ENCODE measurements at regions of chr2 and their contacts with region 1.

Region 1: GRCh38 chr2:208033758-208034502 is 8.6 kb upstream of the PLEKHM3 start:
- DNase-seq: peak; percentile 51 to 68 (median 54)
- ATAC-seq: peak; percentile 97
- H3K4me3 ChIP-seq: no peak overlapping the region
- H3K27ac ChIP-seq: no peak overlapping the region
- H3K4me1 ChIP-seq: no peaks in the 10 kb centered on the region; a peak in 1 of 5 replicates
- H3K27me3 ChIP-seq: no peaks in the 10 kb centered on the region
- CTCF ChIP-seq: peak; percentile 47 to 71 (median 55)
- EP300 ChIP-seq: no peak; the same call in 1 of the 2 replicates
- POLR2A ChIP-seq: no peak
- RAD21 ChIP-seq: peak; percentile 46 to 73

Region 2: DNA sequence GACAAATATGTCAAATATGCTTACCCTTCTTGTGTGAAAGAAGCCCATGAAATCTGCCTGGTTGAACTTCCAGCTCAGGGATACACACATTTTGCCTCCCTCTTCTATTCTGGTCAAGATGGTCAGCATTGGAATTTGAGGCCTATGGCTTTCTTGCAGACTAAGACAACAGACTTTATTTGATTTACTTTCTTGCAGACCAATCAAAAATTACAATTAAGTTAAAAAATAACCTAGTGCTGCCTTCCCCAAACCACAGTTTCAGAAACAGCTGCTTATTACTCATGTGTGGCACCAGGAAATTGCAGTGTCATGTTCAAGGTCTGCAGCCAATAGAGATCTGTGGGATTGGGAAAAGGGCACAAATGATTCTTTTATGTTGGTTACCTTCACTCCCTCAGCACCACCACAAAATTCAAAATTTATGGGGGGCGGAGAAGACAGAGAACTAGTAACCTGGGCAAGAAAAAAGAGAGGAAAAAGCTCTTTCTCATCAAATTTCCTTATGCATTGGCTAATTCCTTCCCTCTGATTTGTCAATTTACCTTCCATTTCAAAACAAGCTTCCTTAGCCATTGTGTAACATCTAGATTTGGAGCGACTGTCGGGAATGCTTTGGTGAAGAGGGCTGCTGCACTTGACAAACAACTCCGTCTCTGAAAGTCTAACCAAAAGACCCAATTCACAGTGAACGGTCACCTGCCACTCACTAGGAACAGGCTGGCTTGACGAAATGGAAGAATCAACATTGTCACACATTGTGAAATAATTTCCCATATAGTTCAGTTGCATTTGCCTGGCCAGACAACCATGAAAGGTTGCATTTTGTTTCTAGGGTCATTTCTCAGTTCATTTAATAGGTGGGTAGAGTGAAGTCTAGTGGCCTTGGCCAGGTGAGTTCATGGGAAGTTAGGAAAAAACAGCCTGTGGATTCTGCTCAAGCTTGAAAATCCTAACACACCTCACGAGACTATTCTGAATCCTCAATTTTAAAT is 163.8 kb before region 1 on chr2:
- CTCF ChIA-PET with region 1: no interaction called
- POLR2A ChIA-PET with region 1: no interaction called
- in situ Hi-C with region 1: no loop called
- intact Hi-C with region 1: loop called (anchors 10 kb)
- DNase-seq: no peak
- ATAC-seq: no peak
- H3K4me3 ChIP-seq: no peak overlapping the region
- H3K27ac ChIP-seq: no peak overlapping the region
- H3K4me1 ChIP-seq: 0 out of 5 replicates have a peak, but pooled peaks cover 0 to 2% of the 10 kb centered on the region in 2 experiments
- H3K27me3 ChIP-seq: no peaks in the 10 kb centered on the region
- CTCF ChIP-seq: no peak
- EP300 ChIP-seq: no peak
- POLR2A ChIP-seq: no peak
- RAD21 ChIP-seq: no peak

Region 3: DNA sequence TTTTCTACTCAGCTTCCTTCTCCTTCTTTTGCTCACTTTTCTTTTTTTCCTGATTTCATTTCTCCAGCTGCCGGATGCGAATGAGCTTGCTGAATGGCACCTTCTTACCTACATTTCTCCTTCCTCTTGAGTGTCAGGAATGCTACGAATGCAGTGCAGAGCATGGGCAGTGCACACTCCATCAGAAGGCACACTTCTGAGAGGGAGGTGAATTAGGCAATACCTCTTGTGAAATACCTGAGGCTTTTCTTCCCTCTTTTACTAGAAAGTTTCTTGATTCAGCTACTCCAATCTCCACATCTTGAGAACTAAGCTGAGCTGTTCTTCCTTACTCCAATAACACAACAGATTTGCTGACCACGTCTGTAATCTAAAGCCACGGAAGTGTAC is 59.7 kb before region 1 on chr2:
- CTCF ChIA-PET with region 1: interaction called, 3 read pairs
- POLR2A ChIA-PET with region 1: no interaction called
- in situ Hi-C with region 1: no loop called
- intact Hi-C with region 1: loop called (anchors 1 kb)
- DNase-seq: no peak
- ATAC-seq: no peak
- H3K4me3 ChIP-seq: no peak overlapping the region
- H3K27ac ChIP-seq: no peak overlapping the region
- H3K4me1 ChIP-seq: peaks cover 0 to 2% of the 10 kb centered on the region in 2 experiments; a peak in 1 of 5 replicates
- H3K27me3 ChIP-seq: no peaks in the 10 kb centered on the region
- CTCF ChIP-seq: no peak
- EP300 ChIP-seq: no peak
- POLR2A ChIP-seq: no peak
- RAD21 ChIP-seq: no peak

Region 4: GRCh38 chr2:208062113-208062512 is 28.2 kb after region 1 on chr2:
- CTCF ChIA-PET with region 1: no interaction called
- POLR2A ChIA-PET with region 1: no interaction called
- in situ Hi-C with region 1: no loop called
- intact Hi-C with region 1: no loop called
- DNase-seq: peak; percentile 26 to 63 (median 32)
- ATAC-seq: peak; percentile 84
- H3K4me3 ChIP-seq: no peak overlapping the region
- H3K27ac ChIP-seq: no peak overlapping the region
- H3K4me1 ChIP-seq: peaks cover 3 to 17% of the 10 kb centered on the region in 2 experiments; a peak in 4 of 5 replicates
- H3K27me3 ChIP-seq: no peaks in the 10 kb centered on the region
- CTCF ChIP-seq: peak in 2 of 3 experiments; percentile 36 to 54; a peak in 2 of 6 replicates
- EP300 ChIP-seq: peak; percentile 59; the same call in 1 of the 2 replicates
- POLR2A ChIP-seq: no peak
- RAD21 ChIP-seq: peak; percentile 49 to 57